ENCODE measurements at regions of chr16 and their contacts with region 1.

Region 1: DNA sequence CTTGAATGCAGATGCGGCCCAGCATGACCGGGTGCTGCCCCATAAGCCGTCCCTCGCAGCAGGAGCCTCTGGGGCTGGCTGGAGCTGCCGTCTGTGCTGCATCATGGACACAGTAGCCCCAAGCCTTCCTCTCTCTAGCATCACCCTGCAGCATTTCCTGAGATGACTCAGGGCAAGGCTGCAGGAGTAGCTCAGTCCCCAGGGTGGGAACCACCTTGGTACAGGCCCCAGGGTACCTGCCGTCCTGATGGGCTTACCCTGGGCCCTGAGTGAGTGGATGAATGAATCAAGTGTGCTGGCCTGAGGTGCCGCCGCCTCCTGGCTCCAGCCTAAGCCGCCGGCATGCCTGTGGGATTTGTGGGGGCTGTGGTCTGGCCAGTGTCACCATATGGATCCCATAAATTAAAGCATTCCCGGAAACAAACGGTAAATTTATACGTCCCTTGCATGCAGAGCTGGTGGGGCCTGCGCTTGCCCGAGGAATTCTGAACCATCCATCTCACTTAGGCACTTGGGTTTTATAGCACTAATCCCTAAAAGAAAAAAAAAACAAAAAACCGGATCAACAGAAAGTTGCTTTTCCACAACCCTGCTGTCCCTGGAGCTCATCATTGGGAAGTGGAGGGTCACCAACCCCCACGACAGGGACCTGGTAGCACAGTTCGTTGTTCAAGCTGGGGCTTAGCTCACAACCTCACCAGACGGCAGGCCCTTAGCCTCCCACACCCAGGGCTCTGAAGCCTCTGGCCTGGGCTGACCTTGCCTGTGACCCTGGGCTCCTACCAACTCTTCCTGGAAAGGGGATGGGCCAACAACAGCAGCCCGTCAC is 242.6 kb upstream of the CIBAR2 start:
- DNase-seq: peak; percentile 92 to 97 (median 95)
- ATAC-seq: peak; percentile 96
- H3K4me3 ChIP-seq: no peak overlapping the region
- H3K27ac ChIP-seq: peak overlapping the region; percentile 76
- H3K4me1 ChIP-seq: peaks cover 43 to 69% of the 10 kb centered on the region in 2 experiments
- H3K27me3 ChIP-seq: no peaks in the 10 kb centered on the region
- CTCF ChIP-seq: no peak
- EP300 ChIP-seq: peak; percentile 72; the same call in 1 of the 2 replicates
- POLR2A ChIP-seq: peak; percentile 40; the same call in 1 of the 2 replicates
- RAD21 ChIP-seq: 0 out of 4 replicates have a peak, but pooled peaks of 1 of the 2 experiments have one; percentile 12

Region 2: DNA sequence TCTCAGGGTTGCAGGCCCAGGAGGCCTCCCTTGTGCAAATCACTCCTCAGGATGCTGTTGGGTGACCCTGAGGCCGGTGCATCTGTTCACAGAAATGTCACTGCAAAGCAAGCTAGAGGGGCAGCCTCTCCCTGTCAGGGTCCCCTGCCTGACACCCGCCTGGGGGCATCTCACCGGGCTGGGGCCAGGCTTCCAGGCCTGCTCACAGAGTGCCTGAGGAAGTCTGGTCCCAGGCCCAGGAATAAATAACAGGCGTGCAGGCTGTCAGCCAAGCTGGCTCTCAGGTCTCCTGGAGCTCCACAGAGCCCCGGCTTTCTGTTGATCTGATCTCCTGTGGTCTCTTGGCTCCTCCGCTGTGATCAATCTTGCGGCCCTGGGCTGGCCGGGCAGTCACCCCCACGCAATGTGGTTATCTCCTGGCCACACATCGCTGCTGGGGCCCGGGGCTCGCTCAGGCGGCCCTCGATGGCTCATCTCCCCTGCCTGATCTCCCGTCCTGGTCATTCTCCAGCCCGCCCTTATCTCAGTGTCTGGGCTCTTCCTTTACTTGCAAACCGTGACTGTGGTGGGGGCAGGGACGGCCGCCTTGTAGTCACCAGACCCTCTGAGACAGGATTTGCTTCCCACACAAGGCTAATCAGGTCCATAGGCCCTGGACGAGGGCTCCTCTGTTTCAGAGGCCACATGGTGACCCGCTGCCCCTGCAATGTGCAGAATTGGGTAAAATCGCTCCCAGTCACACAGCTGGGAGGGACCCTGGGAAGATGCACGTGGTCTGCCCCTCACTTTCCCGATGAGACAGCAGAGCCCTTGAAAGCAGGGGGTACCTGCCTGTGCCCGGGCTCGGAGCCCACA is 27.1 kb after region 1 on chr16:
- CTCF ChIA-PET with region 1: no interaction called
- POLR2A ChIA-PET with region 1: no interaction called
- in situ Hi-C with region 1: no loop called
- intact Hi-C with region 1: loop called (anchors 2 kb)
- DNase-seq: peak; percentile 97 to 100 (median 98)
- ATAC-seq: peak; percentile 90
- H3K4me3 ChIP-seq: no peak overlapping the region
- H3K27ac ChIP-seq: peak overlapping the region; percentile 62
- H3K4me1 ChIP-seq: peaks cover 81 to 100% of the 10 kb centered on the region in 2 experiments
- H3K27me3 ChIP-seq: no peaks in the 10 kb centered on the region
- CTCF ChIP-seq: no peak; a peak in 1 of 6 replicates
- EP300 ChIP-seq: peak; percentile 99
- POLR2A ChIP-seq: no peak
- RAD21 ChIP-seq: peak; percentile 33 to 55; a peak in 2 of 4 replicates

Measured in K562 (cell line).